ENCODE measurements at regions of chr1 and their contacts with region 1.

Region 1: GRCh38 chr1:32933742-32934322 is 30.8 kb downstream of the RNF19B start:
- DNase-seq: peak; percentile 20
- ATAC-seq: peak; percentile 46
- H3K4me3 ChIP-seq: no peak overlapping the region
- H3K27ac ChIP-seq: no peak overlapping the region
- H3K4me1 ChIP-seq: peaks cover 4% of the 10 kb centered on the region; the same call in 1 of the 2 replicates
- H3K27me3 ChIP-seq: no peaks in the 10 kb centered on the region
- CTCF ChIP-seq: peak; percentile 53; the same call in 1 of the 2 replicates

Region 2: DNA sequence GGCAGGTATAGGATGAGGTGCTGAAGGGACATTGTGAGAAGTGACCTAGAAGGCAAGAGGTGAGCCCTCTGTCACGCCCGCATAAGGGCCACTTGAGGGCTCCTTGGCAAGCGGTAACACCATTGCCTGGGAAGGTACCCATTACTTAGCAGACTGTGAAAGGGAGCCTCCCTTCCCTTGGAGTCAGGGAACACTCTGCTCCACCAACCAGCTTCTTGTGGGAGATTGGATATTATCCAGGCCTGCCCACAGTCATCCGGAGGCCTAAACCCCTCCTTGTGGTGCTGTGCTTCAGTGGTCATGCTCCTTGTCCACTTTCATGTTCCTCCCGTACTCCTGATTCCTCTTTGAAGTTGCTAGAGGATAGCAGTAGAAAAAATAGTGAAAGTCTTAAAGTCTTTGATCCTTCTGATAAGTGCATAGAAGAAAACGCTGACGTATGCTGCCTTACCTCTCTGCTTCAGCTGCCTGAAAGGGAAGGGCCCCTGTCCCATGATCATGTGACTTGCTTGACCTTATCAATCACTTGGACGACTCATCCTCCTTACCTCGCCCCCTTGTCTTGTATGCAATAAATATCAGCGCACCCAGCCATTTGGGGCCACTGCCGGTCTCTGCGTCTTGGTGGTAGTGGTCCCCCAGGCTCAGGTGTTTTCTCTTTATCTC is 266.8 kb before region 1 on chr1:
- CTCF ChIA-PET with region 1: no interaction called
- POLR2A ChIA-PET with region 1: no interaction called
- in situ Hi-C with region 1: no loop called
- intact Hi-C with region 1: no loop called
- DNase-seq: no peak
- ATAC-seq: no peak
- H3K4me3 ChIP-seq: no peak overlapping the region
- H3K27ac ChIP-seq: no peak overlapping the region
- H3K4me1 ChIP-seq: no peaks in the 10 kb centered on the region
- H3K27me3 ChIP-seq: no peaks in the 10 kb centered on the region
- CTCF ChIP-seq: no peak

Region 3: GRCh38 chr1:33007190-33008050 is 73.6 kb after region 1 on chr1:
- CTCF ChIA-PET with region 1: interaction called, 7 read pairs
- POLR2A ChIA-PET with region 1: no interaction called
- in situ Hi-C with region 1: no loop called
- intact Hi-C with region 1: loop called (anchors 5 kb)
- DNase-seq: peak; percentile 67
- ATAC-seq: peak; percentile 87
- H3K4me3 ChIP-seq: no peak overlapping the region
- H3K27ac ChIP-seq: no peak overlapping the region
- H3K4me1 ChIP-seq: peaks cover 3% of the 10 kb centered on the region
- H3K27me3 ChIP-seq: no peaks in the 10 kb centered on the region
- CTCF ChIP-seq: peak; percentile 52

Region 4: GRCh38 chr1:33055210-33056008 is 121.6 kb after region 1 on chr1:
- CTCF ChIA-PET with region 1: interaction called, 4 read pairs
- POLR2A ChIA-PET with region 1: no interaction called
- in situ Hi-C with region 1: no loop called
- intact Hi-C with region 1: loop called (anchors 2 kb)
- DNase-seq: peak; percentile 85
- ATAC-seq: peak; percentile 97
- H3K4me3 ChIP-seq: no peak overlapping the region
- H3K27ac ChIP-seq: no peak overlapping the region
- H3K4me1 ChIP-seq: 0 out of 2 replicates have a peak, but pooled peaks cover 3% of the 10 kb centered on the region
- H3K27me3 ChIP-seq: no peaks in the 10 kb centered on the region
- CTCF ChIP-seq: peak; percentile 89

Region 5: DNA sequence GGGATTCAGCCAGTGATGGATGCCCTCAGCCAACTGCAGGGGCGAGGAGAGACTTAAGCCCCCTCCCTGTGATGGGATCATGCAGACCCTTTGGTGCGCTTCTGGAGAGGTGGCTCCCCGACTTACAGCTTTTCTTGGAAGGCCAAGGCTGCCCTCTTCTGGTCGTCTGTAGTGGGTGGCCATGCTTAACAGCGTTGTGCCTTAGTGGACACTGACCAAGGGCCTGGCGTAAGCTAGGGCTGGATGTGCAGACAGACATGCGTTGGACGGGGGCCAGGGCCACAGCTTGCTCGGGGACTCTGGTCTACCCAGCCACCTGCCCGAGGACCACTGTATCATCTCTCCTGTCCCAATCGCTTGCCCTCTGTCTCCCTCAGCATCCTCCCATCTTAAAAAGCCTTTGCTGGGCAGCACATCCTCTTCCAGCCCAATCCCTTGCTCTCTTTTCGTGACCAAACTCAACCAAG is 152.6 kb after region 1 on chr1:
- CTCF ChIA-PET with region 1: interaction called, 8 read pairs
- POLR2A ChIA-PET with region 1: no interaction called
- in situ Hi-C with region 1: no loop called
- intact Hi-C with region 1: loop called (anchors 5 kb)
- DNase-seq: peak; percentile 59
- ATAC-seq: peak; percentile 87
- H3K4me3 ChIP-seq: no peak overlapping the region
- H3K27ac ChIP-seq: no peak overlapping the region
- H3K4me1 ChIP-seq: no peaks in the 10 kb centered on the region; the same call in 1 of the 2 replicates
- H3K27me3 ChIP-seq: no peaks in the 10 kb centered on the region; the same call in 1 of the 2 replicates
- CTCF ChIP-seq: peak; percentile 91

Measured in Panc1 (cell line).